ENCODE measurements at regions of chr6 and their contacts with region 1.

Region 1: DNA sequence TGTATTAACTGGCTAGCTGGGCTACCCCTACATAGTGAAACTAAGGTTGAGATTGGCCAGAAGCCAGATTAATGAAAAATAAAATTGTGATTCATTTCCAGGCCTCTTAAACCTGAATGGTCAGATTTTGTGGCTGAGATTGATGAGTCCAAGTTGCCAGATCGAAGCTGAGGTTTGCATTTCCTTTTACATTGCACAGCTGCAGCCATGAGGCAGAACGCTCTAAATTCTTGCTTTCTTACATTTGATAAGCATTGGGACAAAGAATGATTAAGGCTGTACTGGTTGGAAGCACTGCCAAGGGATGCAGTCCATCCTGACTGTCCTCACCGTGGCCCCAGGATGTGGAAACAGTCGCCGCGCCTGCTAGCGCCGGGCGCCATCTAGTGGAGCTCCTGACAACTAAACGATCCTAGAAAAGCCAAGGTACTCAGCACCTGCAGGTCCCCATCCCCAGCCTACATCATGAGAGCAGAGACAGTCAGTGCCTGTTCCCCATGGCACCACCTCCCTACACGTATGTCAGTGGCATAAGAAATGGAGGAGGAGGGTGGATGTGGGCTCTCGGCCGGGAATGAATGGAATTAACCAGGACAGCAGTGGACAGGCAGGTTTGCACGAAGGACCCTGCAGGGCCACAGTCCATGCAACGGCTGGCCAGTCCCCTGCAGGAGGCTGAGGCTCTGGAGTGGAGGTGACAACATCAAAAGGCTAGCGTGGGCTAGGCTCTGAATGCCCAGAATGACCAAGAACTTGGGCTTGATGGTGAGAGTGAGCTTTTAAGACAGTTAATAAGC is 19.0 kb downstream of the PXDC1 start:
- DNase-seq: peak; percentile 88
- H3K4me3 ChIP-seq: no peak overlapping the region
- H3K27ac ChIP-seq: no peak overlapping the region
- H3K4me1 ChIP-seq: peaks cover 40% of the 10 kb centered on the region
- H3K27me3 ChIP-seq: no peaks in the 10 kb centered on the region
- CTCF ChIP-seq: peak; percentile 79 to 84
- POLR2A ChIP-seq: peak; percentile 22

Region 2: DNA sequence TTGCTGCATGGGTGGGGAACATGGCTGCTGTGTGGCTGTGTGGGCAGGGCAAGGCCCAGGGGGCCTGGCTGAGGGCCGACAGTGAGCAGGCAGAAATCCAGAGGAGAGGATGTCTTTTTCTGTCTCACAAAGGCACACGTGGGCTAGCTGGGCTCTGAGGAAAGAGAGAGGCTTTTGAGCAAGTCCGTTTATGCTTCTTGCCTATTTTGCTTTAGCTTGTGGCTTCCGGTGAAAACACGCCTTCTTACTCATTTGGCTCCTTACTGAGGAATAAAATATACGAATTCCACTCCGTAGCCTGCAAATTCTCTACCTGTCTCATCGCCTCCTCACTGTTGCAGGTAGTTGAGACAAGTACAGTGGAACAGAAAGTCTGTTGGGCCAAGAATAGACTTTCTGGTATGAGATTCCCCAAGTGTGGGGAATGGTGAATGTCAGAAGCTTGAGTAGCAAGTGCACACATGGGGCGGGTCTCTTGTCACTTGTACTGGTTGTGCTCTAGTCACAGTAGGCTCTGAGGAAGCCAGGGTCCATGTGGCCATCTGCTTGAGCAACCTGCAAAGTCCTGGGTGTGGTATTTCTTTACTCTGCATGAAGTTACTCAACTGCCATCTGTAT is 938.9 kb before region 1 on chr6:
- CTCF ChIA-PET with region 1: no interaction called
- POLR2A ChIA-PET with region 1: no interaction called
- dilution Hi-C with region 1: no loop called
- intact Hi-C with region 1: no loop called
- DNase-seq: no peak
- H3K4me3 ChIP-seq: no peak overlapping the region
- H3K27ac ChIP-seq: no peak overlapping the region
- H3K4me1 ChIP-seq: peaks cover 5% of the 10 kb centered on the region
- H3K27me3 ChIP-seq: no peaks in the 10 kb centered on the region
- CTCF ChIP-seq: no peak
- POLR2A ChIP-seq: no peak

Region 3: DNA sequence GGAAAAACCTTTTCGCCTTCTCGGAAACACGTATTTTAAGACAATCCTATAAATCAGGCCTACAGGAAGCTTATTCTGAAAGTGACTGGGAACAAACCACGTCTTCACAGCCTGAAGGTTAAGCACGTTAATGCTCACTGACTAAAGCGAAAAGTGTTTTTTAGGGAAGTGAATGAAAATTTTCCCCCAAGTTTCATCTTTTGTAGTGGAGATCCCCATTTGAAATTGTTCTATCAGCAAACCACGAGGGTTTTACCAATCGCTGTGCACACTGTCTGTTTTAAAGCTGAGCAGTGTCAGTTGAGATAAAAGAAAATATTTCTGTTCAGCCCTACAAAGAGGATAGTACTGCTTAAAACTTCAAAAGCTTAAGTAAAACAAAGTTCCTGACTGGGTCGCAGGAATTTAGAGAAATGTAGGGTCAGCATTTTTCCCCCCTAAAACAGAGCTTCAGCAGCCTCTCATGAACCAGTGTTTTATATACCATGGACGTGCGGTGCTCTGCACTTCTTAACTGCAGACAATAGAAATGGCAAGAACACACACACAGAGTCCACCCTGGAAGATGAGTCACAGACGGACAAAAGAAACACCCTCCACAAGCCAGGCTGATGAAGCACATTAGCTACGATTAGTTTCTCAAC is 310.6 kb before region 1 on chr6:
- CTCF ChIA-PET with region 1: interaction called, 10 read pairs
- POLR2A ChIA-PET with region 1: no interaction called
- dilution Hi-C with region 1: no loop called
- intact Hi-C with region 1: no loop called
- DNase-seq: peak; percentile 85
- H3K4me3 ChIP-seq: no peak overlapping the region
- H3K27ac ChIP-seq: no peak overlapping the region
- H3K4me1 ChIP-seq: peaks cover 17% of the 10 kb centered on the region
- H3K27me3 ChIP-seq: no peaks in the 10 kb centered on the region
- CTCF ChIP-seq: no peak
- POLR2A ChIP-seq: no peak